BJ (cell line): ENCODE measurements at regions of chr7 and their contacts with region 1.

Region 1: DNA sequence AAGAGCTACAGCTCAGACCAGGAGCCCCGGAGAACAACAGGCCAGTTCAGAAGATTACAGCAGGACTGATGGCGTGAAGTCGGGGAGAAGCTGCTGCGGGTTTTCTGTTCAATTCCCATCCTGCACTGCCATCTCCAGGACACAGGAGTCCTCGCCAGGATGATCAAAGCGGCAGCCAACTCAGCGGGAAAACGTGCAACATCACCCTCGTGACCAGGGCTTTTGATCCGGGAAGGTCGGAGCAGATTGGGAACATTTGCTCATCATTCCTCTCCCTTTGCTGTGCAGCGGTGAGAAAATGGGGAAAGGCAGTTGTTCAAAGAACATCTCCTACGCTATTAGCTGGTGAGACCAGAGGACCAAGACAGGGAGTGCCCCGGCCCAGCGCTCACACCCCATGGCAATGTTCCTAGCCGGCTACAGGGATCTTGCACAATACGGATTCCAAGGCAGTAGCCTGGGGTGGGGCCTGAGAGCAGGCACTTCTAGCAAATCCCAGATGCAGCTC is 50.4 kb upstream of the FOXK1 start:
- DNase-seq: peak; percentile 57
- H3K4me3 ChIP-seq: peak overlapping the region; percentile 40
- H3K27me3 ChIP-seq: peaks cover 3% of the 10 kb centered on the region; the same call in 1 of the 2 replicates
- CTCF ChIP-seq: peak; percentile 78

Region 2: DNA sequence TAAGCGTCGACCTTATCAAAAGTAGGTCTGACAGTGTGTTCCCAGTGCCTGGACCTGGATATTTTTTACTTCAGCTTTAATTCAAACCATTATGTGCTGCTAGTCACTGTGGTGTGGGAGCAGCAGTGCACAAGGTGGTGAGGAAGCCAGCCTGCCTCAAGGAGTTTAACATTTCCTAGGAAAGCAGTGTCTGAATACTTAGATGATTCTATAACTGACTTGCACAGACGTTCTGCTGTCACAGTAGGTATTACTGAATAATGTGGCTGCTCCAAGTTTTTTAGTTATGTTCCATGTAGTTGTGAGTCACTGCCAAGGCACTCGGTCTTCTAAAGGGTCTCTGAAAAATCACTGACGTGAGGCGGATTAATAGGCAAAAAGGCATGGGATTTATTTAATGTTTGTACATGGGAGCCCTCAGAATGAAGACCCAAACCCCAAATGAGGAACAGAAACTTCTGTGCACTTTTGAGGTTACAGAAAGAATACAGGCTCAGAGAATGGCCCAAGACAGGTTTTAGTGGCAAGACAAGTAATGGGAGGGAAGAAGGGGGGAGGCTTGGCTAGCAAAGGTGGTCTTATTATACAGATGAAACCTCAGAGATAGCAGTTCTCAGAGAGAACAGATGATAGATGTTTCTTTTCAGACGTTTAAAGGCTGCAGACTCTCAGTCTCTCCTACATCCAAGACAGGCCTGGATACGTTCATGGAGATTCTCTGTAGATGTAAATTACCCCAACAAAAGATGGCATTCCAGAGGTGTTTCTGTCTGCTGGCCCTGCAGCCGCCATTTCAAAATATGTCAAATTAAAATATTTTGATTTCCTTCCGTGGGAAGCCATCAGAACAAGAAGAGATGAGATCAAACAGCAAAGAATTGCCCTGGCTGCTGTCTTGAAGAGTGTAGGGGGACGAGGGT is 1121.4 kb before region 1 on chr7:
- CTCF ChIA-PET with region 1: no interaction called
- POLR2A ChIA-PET with region 1: no interaction called
- DNase-seq: no peak
- H3K4me3 ChIP-seq: no peak overlapping the region
- H3K27me3 ChIP-seq: no peaks in the 10 kb centered on the region
- CTCF ChIP-seq: no peak

Region 3: GRCh38 chr7:4066626-4067475 is 564.9 kb before region 1 on chr7:
- CTCF ChIA-PET with region 1: no interaction called
- POLR2A ChIA-PET with region 1: no interaction called
- DNase-seq: no peak
- H3K4me3 ChIP-seq: no peak overlapping the region
- H3K27me3 ChIP-seq: no peaks in the 10 kb centered on the region
- CTCF ChIP-seq: no peak

Region 4: GRCh38 chr7:4436361-4436895 is 195.3 kb before region 1 on chr7:
- CTCF ChIA-PET with region 1: no interaction called
- POLR2A ChIA-PET with region 1: no interaction called
- DNase-seq: no peak
- H3K4me3 ChIP-seq: no peak overlapping the region
- H3K27me3 ChIP-seq: no peaks in the 10 kb centered on the region
- CTCF ChIP-seq: no peak

Region 5: GRCh38 chr7:4610768-4611467 is 20.8 kb before region 1 on chr7:
- CTCF ChIA-PET with region 1: interaction called, 57 read pairs
- POLR2A ChIA-PET with region 1: no interaction called
- DNase-seq: no peak
- H3K4me3 ChIP-seq: no peak overlapping the region
- H3K27me3 ChIP-seq: no peaks in the 10 kb centered on the region
- CTCF ChIP-seq: peak; percentile 77

Region 6: DNA sequence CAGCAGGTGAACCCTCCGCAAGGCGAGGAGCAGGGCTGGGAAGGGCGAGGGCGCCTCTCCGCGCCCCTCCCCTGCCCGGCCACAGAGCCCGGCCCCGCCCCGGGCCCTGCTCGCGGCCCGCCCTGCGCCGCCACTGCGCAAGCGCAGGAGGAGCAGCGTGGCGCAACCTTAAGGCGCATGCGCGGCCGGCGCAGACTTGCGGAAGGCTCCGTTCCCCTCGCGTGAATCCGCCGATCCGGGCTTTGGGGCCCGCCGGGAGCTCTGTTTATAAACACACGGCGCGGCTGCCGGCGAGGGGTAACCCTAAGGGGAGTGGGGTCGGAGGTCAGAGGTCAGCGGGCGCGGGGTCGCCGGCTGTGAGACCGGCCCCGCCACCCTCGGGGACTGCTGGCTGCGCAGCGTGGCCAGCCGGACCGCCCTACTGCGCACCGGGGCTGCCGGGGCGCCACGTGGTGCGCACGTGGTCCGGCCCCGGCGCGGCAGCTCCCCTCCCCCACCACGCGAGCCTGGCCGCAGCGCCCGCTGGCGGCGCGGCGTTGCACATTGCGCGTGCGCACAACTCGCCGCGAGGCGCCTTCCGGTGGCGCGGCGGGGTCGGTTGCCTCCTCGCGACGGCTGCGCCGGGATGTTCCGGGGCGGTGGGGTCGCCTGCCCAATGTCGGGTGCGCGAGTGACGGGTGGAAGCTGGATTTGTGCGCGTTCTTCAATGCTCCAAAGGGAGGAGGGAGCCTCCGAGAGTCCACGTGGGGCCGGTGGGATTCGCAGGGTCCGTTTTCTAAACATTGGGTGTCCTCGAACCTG is 10.1 kb after region 1 on chr7:
- CTCF ChIA-PET with region 1: interaction called, 14 read pairs
- POLR2A ChIA-PET with region 1: no interaction called
- DNase-seq: no peak
- H3K4me3 ChIP-seq: peak overlapping the region; percentile 72
- H3K27me3 ChIP-seq: no peaks in the 10 kb centered on the region
- CTCF ChIP-seq: 0 out of 2 replicates have a peak, but pooled peaks have one; percentile 13

Region 7: GRCh38 chr7:4712281-4713182 is 80.8 kb after region 1 on chr7:
- CTCF ChIA-PET with region 1: no interaction called
- POLR2A ChIA-PET with region 1: no interaction called
- DNase-seq: peak; percentile 53
- H3K4me3 ChIP-seq: no peak overlapping the region
- H3K27me3 ChIP-seq: no peaks in the 10 kb centered on the region
- CTCF ChIP-seq: no peak

Region 8: GRCh38 chr7:4753711-4754432 is 122.2 kb after region 1 on chr7:
- CTCF ChIA-PET with region 1: interaction called, 11 read pairs
- POLR2A ChIA-PET with region 1: no interaction called
- DNase-seq: no peak
- H3K4me3 ChIP-seq: no peak overlapping the region
- H3K27me3 ChIP-seq: no peaks in the 10 kb centered on the region
- CTCF ChIP-seq: peak; percentile 91